Activated CD4-positive, alpha-beta T cell treated with anti-CD3 and anti-CD28 coated beads, Interleukin-2, amount 10 ng/mL, durations not matched to agents 7 days and 5 days (primary cell): ENCODE measurements at regions of chr17 and their contacts with region 1.

Region 1: GRCh38 chr17:40121181-40122135 is at the start of gene MSL1:
- DNase-seq: peak; percentile 84
- H3K4me3 Mint-ChIP-seq: peak within 1 kb of the TSS; percentile 98
- H3K27ac Mint-ChIP-seq: peak within 1 kb of the TSS; percentile 85
- H3K4me1 Mint-ChIP-seq: peaks cover 39% of the 10 kb centered on the region
- H3K27me3 Mint-ChIP-seq: no peaks in the 10 kb centered on the region
- total RNA-seq, gene MSL1: 95.4 to 97.1 TPM

Region 2: DNA sequence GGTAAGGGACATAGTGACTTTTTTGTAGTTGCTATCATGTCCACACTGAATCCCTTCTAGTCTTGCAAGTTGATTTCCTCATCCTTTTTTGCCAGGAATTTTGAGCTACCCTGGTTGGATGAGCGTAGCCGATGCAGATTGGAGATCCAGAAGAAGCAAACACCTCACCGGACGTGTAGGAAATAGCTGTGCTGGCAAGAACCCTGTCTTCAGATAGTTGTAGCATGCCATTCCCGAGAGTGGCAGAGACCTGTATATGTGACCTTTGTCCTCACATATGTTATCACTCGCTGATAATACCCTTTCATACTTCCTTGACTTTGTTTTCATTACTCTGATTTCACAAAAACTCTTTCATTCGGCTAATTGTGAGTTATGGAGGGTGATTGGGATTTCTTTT is 12.7 kb after region 1 on chr17:
- CTCF ChIA-PET with region 1: interaction called, 12 read pairs
- POLR2A ChIA-PET with region 1: no interaction called
- DNase-seq: no peak
- H3K4me3 Mint-ChIP-seq: no peak overlapping the region
- H3K27ac Mint-ChIP-seq: no peak overlapping the region
- H3K4me1 Mint-ChIP-seq: peaks cover 28% of the 10 kb centered on the region
- H3K27me3 Mint-ChIP-seq: no peaks in the 10 kb centered on the region

Region 3: GRCh38 chr17:40203131-40203530 is 81.7 kb after region 1 on chr17:
- CTCF ChIA-PET with region 1: no interaction called
- POLR2A ChIA-PET with region 1: no interaction called
- DNase-seq: no peak
- H3K4me3 Mint-ChIP-seq: no peak overlapping the region
- H3K27ac Mint-ChIP-seq: no peak overlapping the region
- H3K4me1 Mint-ChIP-seq: peaks cover 5% of the 10 kb centered on the region
- H3K27me3 Mint-ChIP-seq: peaks cover 5% of the 10 kb centered on the region

Region 4: DNA sequence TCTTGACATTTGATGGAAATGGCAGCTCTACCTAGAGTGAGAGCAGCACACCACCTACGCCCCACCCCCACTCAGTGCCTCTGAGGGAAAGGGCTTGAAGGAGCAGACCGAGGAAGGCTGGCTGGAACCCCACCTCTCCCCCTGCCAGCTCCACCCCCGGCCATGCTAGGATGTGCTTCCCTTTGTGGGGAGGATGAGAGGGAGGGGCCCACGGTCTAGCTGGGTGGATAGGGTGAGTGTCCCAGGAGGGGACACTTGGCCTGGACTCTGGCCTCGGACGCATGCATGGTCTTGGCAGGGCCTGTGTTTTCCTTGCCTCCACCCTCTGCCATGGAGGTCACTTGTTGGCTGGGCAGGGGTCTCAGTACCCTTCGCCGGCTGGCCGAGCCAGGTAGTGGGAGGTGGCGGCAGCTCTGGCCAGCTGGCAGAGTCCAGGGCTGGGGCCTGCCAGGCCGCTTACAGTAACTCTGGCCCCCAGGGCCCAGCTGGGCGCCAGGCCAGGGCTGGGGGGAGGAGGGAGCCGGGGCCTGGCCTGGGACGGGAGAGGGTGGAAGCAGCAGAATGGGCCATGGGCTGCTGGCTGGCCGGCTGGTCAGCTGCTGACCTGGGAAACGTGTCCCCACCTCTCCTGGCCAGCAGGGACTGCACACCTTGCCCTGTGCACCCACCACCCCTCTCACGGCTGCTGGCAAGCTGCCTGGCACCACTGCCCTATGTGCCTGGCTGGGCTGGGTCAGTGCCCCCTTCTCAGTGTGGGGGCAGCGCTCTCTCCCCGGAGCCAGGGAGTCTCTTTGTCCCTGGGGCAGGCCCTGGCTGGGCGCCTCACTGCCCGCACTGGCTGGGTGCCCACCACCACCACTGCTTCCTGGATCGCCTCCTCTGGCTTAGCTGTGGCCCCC is 210.5 kb after region 1 on chr17:
- CTCF ChIA-PET with region 1: no interaction called
- POLR2A ChIA-PET with region 1: no interaction called
- DNase-seq: peak; percentile 42
- H3K4me3 Mint-ChIP-seq: peak overlapping the region; percentile 45
- H3K27ac Mint-ChIP-seq: peak overlapping the region; percentile 71
- H3K4me1 Mint-ChIP-seq: peaks cover 86% of the 10 kb centered on the region
- H3K27me3 Mint-ChIP-seq: no peaks in the 10 kb centered on the region